Spleen (tissue), 13 donors: ENCODE measurements at regions of chr7 and their contacts with region 1.

Region 1: DNA sequence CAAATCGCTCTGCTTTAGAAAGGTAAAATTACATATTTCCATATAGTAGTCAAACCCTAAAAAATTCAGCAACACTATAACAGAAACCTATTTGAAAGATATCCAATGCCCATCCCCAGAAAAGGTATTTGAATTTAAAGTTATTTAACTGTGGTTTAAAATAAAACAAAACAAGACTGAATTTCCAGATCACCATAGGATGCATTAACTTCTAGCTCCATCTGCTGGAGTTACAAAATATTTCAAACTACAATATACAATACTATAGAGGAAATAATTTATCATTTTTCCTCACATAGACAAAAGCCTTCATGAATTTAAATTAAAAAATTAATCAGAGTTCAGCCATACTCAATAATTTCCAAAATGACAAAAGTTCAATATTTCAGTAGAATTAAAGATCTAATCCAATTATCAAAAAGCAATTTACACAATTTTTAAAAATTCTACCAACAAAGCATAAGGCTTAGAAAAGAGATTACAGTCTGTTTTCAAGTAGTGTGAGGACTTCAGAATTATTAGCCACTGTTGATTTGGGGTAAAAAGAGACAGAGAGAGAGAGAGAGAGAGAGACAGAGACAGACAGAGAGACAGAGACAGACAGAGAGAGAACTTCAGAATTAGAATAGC is 75.9 kb downstream of the LMBR1 start:
- DNase-seq: no peak
- H3K4me3 ChIP-seq: no peak overlapping the region
- H3K27ac ChIP-seq: no peak overlapping the region
- H3K4me1 ChIP-seq: no peaks in the 10 kb centered on the region
- H3K27me3 ChIP-seq: no peaks in the 10 kb centered on the region
- CTCF ChIP-seq: peak in 6 of 11 experiments; percentile 6 to 32 (median 14)
- POLR2A ChIP-seq: no peak

Region 2: GRCh38 chr7:155796381-155797261 is 1020.4 kb before region 1 on chr7:
- intact Hi-C with region 1: loop called (anchors 10 kb)
- DNase-seq: peak; percentile 92
- H3K4me3 ChIP-seq: peak overlapping the region in 1 of 8 donors; percentile 28
- H3K27ac ChIP-seq: no peak overlapping the region
- H3K4me1 ChIP-seq: peaks cover 2 to 17% (median 8%) of the 10 kb centered on the region in 6 donors
- H3K27me3 ChIP-seq: peaks cover 0 to 72% (median 40%) of the 10 kb centered on the region in 7 donors
- CTCF ChIP-seq: peak; percentile 48 to 93 (median 88)
- POLR2A ChIP-seq: no peak